ENCODE measurements at regions of chr12 and their contacts with region 1.

Region 1: DNA sequence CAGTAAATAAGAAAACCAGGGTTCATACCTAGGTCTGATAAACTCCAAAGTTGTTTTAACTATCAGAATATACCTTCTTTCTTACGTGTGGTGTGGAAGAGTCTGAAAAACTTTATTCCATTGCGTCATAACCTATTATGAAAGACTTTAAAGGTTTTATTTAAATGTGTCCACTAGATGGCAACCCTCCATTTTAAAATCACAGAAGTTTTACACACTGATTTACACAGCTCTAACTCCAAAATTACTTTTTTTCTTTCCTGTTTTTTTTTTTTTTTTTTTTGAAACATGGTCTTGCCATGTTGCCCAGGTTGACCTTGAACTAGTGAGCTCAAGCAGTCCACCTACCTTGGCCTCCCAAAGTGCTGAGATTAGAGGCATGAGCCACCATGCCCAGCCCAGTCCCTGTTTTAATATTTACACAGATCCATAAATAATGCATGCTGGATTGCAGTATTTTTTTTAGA is 17.3 kb upstream of the TMPRSS12 start:
- DNase-seq: peak in 1 of 2 experiments; percentile 66
- H3K4me3 ChIP-seq: no peak overlapping the region
- H3K27ac ChIP-seq: peak overlapping the region; percentile 47
- H3K4me1 ChIP-seq: peaks cover 4% of the 10 kb centered on the region
- H3K27me3 ChIP-seq: no peaks in the 10 kb centered on the region
- CTCF ChIP-seq: peak; percentile 79

Region 2: GRCh38 chr12:50986966-50987737 is 161.7 kb after region 1 on chr12:
- CTCF ChIA-PET with region 1: interaction called, 11 read pairs
- POLR2A ChIA-PET with region 1: interaction called, 7 read pairs
- intact Hi-C with region 1: loop called (anchors 1 kb)
- DNase-seq: peak in 1 of 2 experiments; percentile 18
- H3K4me3 ChIP-seq: no peak overlapping the region
- H3K27ac ChIP-seq: no peak overlapping the region
- H3K4me1 ChIP-seq: no peaks in the 10 kb centered on the region
- H3K27me3 ChIP-seq: no peaks in the 10 kb centered on the region
- CTCF ChIP-seq: peak; percentile 62; the same call in 1 of the 2 replicates

Region 3: GRCh38 chr12:51065530-51065929 is 240.1 kb after region 1 on chr12:
- CTCF ChIA-PET with region 1: no interaction called
- POLR2A ChIA-PET with region 1: interaction called, 26 read pairs
- intact Hi-C with region 1: no loop called
- DNase-seq: no peak
- H3K4me3 ChIP-seq: no peak overlapping the region
- H3K27ac ChIP-seq: no peak overlapping the region
- H3K4me1 ChIP-seq: peaks cover 11% of the 10 kb centered on the region
- H3K27me3 ChIP-seq: no peaks in the 10 kb centered on the region
- CTCF ChIP-seq: no peak

Region 4: DNA sequence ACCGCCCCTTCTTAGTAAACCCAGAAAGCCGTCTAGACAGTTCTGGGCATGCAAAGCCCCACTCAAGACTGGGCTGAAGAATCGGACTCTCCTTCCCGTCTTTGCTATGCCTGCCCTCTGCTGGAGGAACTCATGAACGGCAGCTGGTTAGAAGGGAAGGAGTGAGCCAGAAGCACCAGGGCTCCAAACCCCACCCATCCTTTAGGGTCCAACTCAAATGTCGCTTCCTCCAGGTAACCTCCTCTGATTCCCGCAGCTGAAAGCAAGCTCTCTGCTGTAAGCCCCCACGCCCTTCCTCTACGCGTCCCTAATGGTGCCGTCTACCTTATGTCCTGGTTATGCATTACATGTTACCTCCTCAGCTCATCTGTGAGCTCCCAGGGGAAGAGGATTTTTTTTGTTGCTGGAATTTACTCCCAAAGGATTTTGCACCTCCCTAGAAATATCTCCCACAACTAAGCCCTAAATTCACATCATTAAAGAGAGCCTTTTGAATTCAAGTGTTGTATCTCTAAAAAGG is 706.6 kb after region 1 on chr12:
- CTCF ChIA-PET with region 1: no interaction called
- POLR2A ChIA-PET with region 1: no interaction called
- intact Hi-C with region 1: no loop called
- DNase-seq: peak in 1 of 2 experiments; percentile 73
- H3K4me3 ChIP-seq: no peak overlapping the region
- H3K27ac ChIP-seq: no peak overlapping the region
- H3K4me1 ChIP-seq: no peaks in the 10 kb centered on the region
- H3K27me3 ChIP-seq: peaks cover 14% of the 10 kb centered on the region
- CTCF ChIP-seq: peak; percentile 87

Region 5: DNA sequence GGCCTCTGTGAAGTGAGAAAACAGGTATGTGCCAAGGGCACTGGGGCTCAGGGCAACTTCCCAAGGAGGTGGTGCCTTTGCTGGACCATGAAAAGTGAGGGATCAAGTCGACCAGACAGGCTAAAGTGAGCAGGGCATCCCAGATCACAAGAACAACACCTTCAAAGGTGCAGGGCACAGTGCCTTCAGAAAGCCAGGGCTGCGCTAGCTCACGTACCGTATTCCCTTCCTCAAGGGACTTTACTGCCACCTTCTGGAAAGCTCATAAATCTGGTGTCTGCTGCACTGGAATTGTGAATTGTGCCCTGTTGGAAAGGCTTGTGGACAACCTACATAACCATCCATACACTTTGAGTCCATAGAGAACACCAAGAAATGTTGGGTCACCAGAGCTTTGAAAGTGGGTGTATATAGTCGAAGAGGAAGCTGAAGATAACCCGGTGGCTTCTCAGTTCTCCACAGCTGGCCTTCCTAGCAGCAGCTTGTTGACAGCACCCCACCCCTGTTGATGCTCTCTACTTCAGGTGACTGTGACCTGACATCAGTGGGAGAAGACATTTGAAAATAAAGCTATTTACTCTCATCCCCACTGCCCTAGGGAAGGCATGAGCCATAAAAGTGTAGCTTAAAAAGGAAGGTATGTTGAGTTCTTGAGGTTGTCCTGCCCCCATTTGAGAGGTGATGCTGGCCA is 998.6 kb after region 1 on chr12:
- CTCF ChIA-PET with region 1: no interaction called
- POLR2A ChIA-PET with region 1: no interaction called
- intact Hi-C with region 1: loop called (anchors 5 kb)
- DNase-seq: peak; percentile 30 to 39
- H3K4me3 ChIP-seq: no peak overlapping the region
- H3K27ac ChIP-seq: no peak overlapping the region
- H3K4me1 ChIP-seq: no peaks in the 10 kb centered on the region
- H3K27me3 ChIP-seq: peaks cover 22% of the 10 kb centered on the region
- CTCF ChIP-seq: peak; percentile 61

Measured in PC-9 (cell line).